Heart right ventricle (tissue), 16 donors: ENCODE measurements at regions of chr5 and their contacts with region 1.

Region 1: GRCh38 chr5:131563434-131564228 is 71.4 kb downstream of the RAPGEF6 start:
- DNase-seq: no peak
- ATAC-seq: no peak
- H3K4me3 ChIP-seq: no peak overlapping the region
- H3K27ac ChIP-seq: no peak overlapping the region
- H3K4me1 ChIP-seq: no peaks in the 10 kb centered on the region
- H3K27me3 ChIP-seq: no peaks in the 10 kb centered on the region
- CTCF ChIP-seq: no peak

Region 2: DNA sequence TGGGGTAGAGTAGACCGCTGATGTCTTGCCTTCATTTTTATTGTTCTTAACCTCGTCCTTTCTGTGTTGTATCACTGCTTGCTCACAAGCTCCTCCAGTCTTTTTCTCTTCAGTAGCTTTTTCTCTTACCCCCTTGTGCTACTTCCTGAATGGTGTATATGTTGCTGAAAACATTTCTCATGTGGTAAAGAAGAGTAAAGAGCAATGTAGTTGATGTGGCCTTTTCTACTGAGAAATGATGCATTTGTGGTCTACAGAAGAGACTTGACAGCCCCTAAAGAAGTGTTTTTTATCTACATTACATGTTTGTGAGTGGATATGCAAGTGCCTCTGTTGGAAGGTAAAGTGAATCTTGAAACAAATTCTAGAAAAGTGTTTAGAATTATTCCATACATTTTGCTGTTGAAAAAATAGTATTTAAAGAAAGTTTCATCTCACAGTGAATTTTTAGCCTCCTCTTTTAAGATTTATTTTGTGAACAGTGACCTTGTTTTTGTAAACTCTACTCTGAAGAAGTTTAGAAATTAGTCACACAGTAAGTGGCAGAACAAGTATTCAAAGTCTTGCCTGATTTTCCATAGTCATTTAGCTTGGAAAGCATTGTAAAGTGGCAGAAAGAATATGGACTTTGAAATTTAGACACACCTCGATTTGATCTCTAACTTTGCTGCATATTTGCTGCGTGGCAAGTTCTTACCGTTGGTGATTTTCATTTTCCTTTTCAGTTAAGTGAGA is 282.3 kb before region 1 on chr5:
- intact Hi-C with region 1: no loop called
- DNase-seq: no peak
- ATAC-seq: peak in 1 of 8 donors; percentile 22
- H3K4me3 ChIP-seq: peak overlapping the region in 1 of 10 donors; percentile 22
- H3K27ac ChIP-seq: peak overlapping the region in 1 of 10 donors; percentile 80
- H3K4me1 ChIP-seq: peaks cover 0 to 84% (median 6%) of the 10 kb centered on the region in 9 donors
- H3K27me3 ChIP-seq: no peaks in the 10 kb centered on the region
- CTCF ChIP-seq: no peak

Region 3: DNA sequence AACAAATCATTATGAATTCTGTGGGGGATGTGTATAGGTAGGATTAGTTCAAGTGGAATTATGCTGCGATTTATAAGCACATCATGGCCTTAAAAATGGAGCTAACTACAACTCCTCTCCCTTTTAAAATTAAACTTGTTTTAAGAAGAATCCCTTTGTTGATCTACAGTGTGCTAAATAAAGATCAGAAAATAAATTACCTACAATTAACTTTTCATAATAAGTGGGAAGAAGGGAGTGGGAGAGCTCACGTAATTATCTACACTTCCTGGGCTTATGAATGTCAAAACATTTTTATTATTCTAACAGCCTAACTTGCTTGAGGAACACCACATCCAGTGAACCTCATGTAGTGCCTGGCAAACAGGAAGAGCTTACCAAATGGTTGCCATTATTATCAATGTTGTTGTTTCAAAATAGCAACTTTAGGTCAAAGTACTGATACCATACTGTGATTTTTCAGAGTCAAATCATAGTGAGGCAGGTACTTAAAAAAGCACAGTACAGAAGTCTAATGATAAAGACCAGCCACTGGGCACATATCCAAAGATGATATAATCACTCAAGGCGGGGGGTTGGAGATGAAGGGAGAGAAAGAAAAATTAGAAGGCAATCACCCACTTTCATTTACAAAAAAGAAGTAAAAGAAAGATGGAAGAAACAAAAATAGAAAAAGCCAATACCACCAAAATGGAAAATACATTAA is 102.6 kb before region 1 on chr5:
- intact Hi-C with region 1: loop called in 1 of 10 experiments (anchors 5 kb)
- DNase-seq: no peak
- ATAC-seq: peak in 1 of 8 donors; percentile 44
- H3K4me3 ChIP-seq: no peak overlapping the region
- H3K27ac ChIP-seq: no peak overlapping the region
- H3K4me1 ChIP-seq: peaks cover 0 to 23% (median 13%) of the 10 kb centered on the region in 9 donors
- H3K27me3 ChIP-seq: no peaks in the 10 kb centered on the region
- CTCF ChIP-seq: no peak